Tibial artery (tissue), 4 donors: ENCODE measurements at regions of chr17 and their contacts with region 1.

Region 1: GRCh38 chr17:35242805-35243560 is at the start of gene SLFN5:
- DNase-seq: peak; percentile 97 to 98
- H3K4me3 ChIP-seq: peak within 1 kb of the TSS; percentile 74 to 76
- H3K27ac ChIP-seq: peak within 1 kb of the TSS; percentile 92 to 95
- H3K4me1 ChIP-seq: peaks cover 0 to 37% (median 26%) of the 10 kb centered on the region in 4 donors
- H3K27me3 ChIP-seq: no peaks in the 10 kb centered on the region
- CTCF ChIP-seq: no peak

Region 2: DNA sequence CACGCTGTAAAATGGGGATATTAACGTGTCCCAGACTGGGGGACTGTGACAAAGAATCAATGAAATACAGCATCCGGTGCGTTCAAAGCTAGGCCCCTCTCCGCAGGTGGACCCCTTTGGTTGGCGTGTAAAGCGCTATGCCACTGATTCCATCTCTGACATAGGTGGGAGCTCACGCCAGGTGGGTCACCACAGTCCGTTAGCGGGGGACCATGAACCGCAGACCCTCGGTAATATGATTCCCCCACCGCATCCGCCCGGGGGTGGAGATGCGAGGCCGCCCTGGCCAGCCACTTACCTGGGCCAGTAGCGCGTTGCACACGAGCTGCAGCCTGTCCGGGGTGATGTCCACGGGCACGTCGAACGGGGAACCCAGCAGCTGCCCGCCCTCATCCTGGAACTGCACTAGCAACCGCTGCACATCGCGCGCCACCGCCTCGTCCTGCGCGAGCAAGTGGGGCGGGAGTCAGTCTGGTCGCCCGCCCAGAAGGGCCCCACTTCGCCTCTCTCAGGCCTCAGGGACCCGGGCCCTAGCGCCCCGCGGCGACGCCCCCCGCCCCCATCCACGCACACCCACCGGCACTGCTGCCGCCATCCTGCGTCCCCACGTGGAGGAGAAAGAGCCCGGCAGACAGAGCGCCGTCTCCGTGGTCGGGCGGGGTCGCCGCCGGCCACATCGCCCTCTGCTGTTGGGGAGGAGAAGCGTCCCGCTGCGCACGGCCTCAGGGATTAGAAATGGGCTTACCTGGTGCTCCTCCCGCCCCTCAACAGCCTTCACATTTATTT is 101.1 kb before region 1 on chr17 and contains the start of gene NLE1:
- intact Hi-C with region 1: loop called (anchors 5 kb)
- DNase-seq: peak; percentile 66 to 86
- H3K4me3 ChIP-seq: peak within 1 kb of the TSS; percentile 79 to 97
- H3K27ac ChIP-seq: peak within 1 kb of the TSS; percentile 12 to 26
- H3K4me1 ChIP-seq: peaks cover 0 to 20% (median 11%) of the 10 kb centered on the region in 4 donors
- H3K27me3 ChIP-seq: no peaks in the 10 kb centered on the region
- CTCF ChIP-seq: peak; percentile 78 to 98

Region 3: DNA sequence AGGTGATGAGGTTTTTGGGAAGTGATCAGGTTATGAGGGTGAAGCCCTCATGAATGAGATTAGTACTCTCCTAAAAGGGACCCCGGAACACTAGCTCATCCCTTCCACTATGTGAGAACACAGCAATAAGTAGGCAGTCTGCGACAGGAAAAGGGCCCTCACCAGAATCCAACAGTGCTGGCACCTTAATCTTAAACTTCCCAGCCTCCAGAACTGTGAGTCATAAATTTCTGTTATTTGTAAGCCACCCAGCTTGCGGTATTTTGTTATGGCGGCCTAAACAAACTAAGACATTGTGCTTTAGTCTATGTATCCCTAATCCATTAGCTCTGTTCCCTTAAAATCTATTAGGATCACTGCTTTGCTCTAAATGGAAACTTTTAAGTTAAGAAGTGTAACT is 180.8 kb after region 1 on chr17:
- intact Hi-C with region 1: no loop called
- DNase-seq: no peak
- H3K4me3 ChIP-seq: no peak overlapping the region
- H3K27ac ChIP-seq: no peak overlapping the region
- H3K4me1 ChIP-seq: no peaks in the 10 kb centered on the region
- H3K27me3 ChIP-seq: no peaks in the 10 kb centered on the region
- CTCF ChIP-seq: no peak

Region 4: GRCh38 chr17:35568541-35568940 is 325.6 kb after region 1 on chr17:
- intact Hi-C with region 1: loop called (anchors 10 kb)
- DNase-seq: no peak
- H3K4me3 ChIP-seq: peak overlapping the region; percentile 62
- H3K27ac ChIP-seq: peak overlapping the region; percentile 80 to 89
- H3K4me1 ChIP-seq: peaks cover 0 to 26% (median 16%) of the 10 kb centered on the region in 4 donors
- H3K27me3 ChIP-seq: no peaks in the 10 kb centered on the region
- CTCF ChIP-seq: no peak